Kidney (tissue), 22 donors: ENCODE measurements at regions of chr2 and their contacts with region 1.

Region 1: GRCh38 chr2:134245340-134245984 is 8.4 kb upstream of the MGAT5 start:
- DNase-seq: peak in 4 of 5 donors; percentile 71 to 83 (median 74)
- H3K4me3 ChIP-seq: no peak overlapping the region
- H3K27ac ChIP-seq: no peak overlapping the region
- H3K4me1 ChIP-seq: peaks cover 0 to 4% (median 4%) of the 10 kb centered on the region in 3 donors
- H3K27me3 ChIP-seq: no peaks in the 10 kb centered on the region
- CTCF ChIP-seq: peak; percentile 68

Region 2: GRCh38 chr2:134118279-134119116 is 127.0 kb before region 1 on chr2:
- intact Hi-C with region 1: loop called (anchors 10 kb)
- DNase-seq: peak; percentile 77 to 95 (median 89)
- H3K4me3 ChIP-seq: no peak overlapping the region
- H3K27ac ChIP-seq: peak overlapping the region in 1 of 2 donors; percentile 25
- H3K4me1 ChIP-seq: peaks cover 0 to 15% (median 3%) of the 10 kb centered on the region in 3 donors
- H3K27me3 ChIP-seq: no peaks in the 10 kb centered on the region
- CTCF ChIP-seq: peak; percentile 93